ENCODE measurements at regions of chr4 and their contacts with region 1.

Region 1: DNA sequence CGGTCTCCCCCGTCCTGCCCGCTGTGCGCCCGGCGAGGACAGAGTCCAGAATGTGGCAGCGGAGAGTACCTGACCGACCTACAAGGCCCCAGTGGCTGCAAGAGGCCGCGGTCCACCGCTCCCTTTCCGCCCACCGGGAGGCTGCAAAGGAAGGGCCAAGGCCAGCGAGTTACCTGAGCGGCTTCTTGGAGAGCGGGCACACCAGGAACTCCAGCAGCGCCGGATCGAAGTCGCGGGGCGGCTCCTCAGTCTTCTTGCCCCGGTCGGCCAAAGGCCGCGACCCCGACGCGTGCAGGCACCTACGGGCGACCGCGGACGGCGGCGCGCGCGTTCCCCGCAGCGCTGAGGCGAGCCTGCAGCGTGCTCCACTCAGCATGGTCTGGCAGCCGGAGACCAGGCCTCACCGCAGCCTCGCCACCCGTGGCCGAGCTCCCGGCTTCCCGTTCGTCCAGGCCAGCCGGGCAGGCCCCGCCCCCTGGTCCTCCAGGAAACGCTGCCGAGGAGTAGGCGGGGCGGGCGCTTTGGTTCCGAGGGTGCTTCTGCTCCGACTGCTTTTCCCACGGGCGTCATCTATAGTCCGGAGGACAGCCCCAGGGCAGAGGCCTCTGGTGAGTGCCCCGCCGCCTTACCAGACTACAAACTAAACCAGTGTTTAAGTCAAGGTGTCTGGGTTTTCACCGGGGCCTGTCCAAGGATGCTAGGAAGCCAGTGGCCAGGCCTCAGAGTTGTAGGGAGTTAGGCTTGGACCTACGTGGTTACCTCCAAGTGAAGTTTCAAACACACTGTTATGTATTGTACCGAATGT is at the start of gene PYURF:
- DNase-seq: peak; percentile 44
- ATAC-seq: peak; percentile 88
- H3K4me3 ChIP-seq: peak within 1 kb of the TSS; percentile 71
- H3K27ac ChIP-seq: peak within 1 kb of the TSS; percentile 67
- H3K4me1 ChIP-seq: peaks cover 31% of the 10 kb centered on the region
- H3K27me3 ChIP-seq: no peaks in the 10 kb centered on the region
- CTCF ChIP-seq: no peak
- EP300 ChIP-seq: no peak
- POLR2A ChIP-seq: peak; percentile 93
- RAD21 ChIP-seq: no peak
- polyA plus RNA-seq, gene PYURF: 16.7 to 58.1 TPM

Region 2: GRCh38 chr4:87679449-87680169 is 843.9 kb before region 1 on chr4:
- CTCF ChIA-PET with region 1: no interaction called
- POLR2A ChIA-PET with region 1: no interaction called
- RAD21 ChIA-PET with region 1: no interaction called
- SMC1A ChIA-PET with region 1: no interaction called
- in situ Hi-C with region 1: loop called (anchors 25 kb)
- intact Hi-C with region 1: no loop called
- DNase-seq: peak; percentile 2
- ATAC-seq: peak; percentile 61; the same call in 2 of the 3 replicates
- H3K4me3 ChIP-seq: no peak overlapping the region
- H3K27ac ChIP-seq: no peak overlapping the region
- H3K4me1 ChIP-seq: peaks cover 5% of the 10 kb centered on the region; the same call in 1 of the 2 replicates
- H3K27me3 ChIP-seq: no peaks in the 10 kb centered on the region
- CTCF ChIP-seq: peak; percentile 59 to 73 (median 66)
- EP300 ChIP-seq: no peak
- POLR2A ChIP-seq: no peak
- RAD21 ChIP-seq: peak; percentile 86

Region 3: GRCh38 chr4:88284439-88285234 is 238.9 kb before region 1 on chr4 and contains the start of gene PPM1K:
- CTCF ChIA-PET with region 1: interaction called, 3 read pairs
- POLR2A ChIA-PET with region 1: interaction called, 3 read pairs
- RAD21 ChIA-PET with region 1: interaction called, 5 read pairs
- SMC1A ChIA-PET with region 1: interaction called, 3 read pairs
- in situ Hi-C with region 1: no loop called
- intact Hi-C with region 1: loop called (anchors 2 kb)
- DNase-seq: peak; percentile 93
- ATAC-seq: peak; percentile 88
- H3K4me3 ChIP-seq: peak within 1 kb of the TSS; percentile 73
- H3K27ac ChIP-seq: peak within 1 kb of the TSS; percentile 98
- H3K4me1 ChIP-seq: 0 out of 2 replicates have a peak, but pooled peaks cover 5% of the 10 kb centered on the region
- H3K27me3 ChIP-seq: no peaks in the 10 kb centered on the region
- CTCF ChIP-seq: no peak
- EP300 ChIP-seq: 0 out of 4 replicates have a peak, but pooled peaks of 1 of the 2 experiments have one; percentile 4
- POLR2A ChIP-seq: no peak; the same call in none of the 2 replicates
- RAD21 ChIP-seq: no peak
- polyA plus RNA-seq, gene PPM1K: 25.3 to 25.4 TPM

Region 4: DNA sequence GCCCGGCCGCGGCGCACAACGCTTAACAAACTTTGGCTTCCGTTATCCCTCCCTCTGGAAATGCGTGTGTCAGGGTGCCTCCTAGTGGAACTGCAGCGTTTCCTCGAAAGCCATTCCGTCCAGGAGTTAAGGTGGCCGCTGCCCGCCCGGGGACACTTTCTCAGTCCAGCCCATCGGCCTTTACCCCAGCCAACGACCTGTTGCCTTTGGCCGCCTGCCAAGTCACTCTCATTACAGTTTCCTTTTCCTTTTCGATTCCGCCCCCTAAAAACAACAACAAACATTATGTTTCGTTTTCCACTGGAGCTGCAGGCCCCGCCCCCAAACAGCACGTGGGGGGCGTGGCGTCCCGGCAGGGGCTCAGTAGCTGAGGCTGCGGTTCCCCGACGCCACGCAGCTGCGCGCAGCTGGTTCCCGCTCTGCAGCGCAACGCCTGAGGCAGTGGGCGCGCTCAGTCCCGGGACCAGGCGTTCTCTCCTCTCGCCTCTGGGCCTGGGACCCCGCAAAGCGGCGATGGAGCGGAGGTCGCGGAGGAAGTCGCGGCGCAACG is 66.7 kb before region 1 on chr4 and contains the start of gene HERC5:
- CTCF ChIA-PET with region 1: interaction called, 3 read pairs
- POLR2A ChIA-PET with region 1: interaction called, 5 read pairs
- RAD21 ChIA-PET with region 1: interaction called, 13 read pairs
- SMC1A ChIA-PET with region 1: interaction called, 3 read pairs
- in situ Hi-C with region 1: no loop called
- intact Hi-C with region 1: no loop called
- DNase-seq: peak; percentile 87
- ATAC-seq: peak; percentile 91
- H3K4me3 ChIP-seq: peak within 1 kb of the TSS; percentile 78
- H3K27ac ChIP-seq: peak within 1 kb of the TSS; percentile 97
- H3K4me1 ChIP-seq: peaks cover 5% of the 10 kb centered on the region
- H3K27me3 ChIP-seq: no peaks in the 10 kb centered on the region
- CTCF ChIP-seq: peak in 2 of 3 experiments; percentile 33 to 63; a peak in 3 of 6 replicates
- EP300 ChIP-seq: no peak
- POLR2A ChIP-seq: peak; percentile 89
- RAD21 ChIP-seq: peak; percentile 34; the same call in 1 of the 2 replicates
- polyA plus RNA-seq, gene HERC5: 12.5 to 18.6 TPM

Region 5: DNA sequence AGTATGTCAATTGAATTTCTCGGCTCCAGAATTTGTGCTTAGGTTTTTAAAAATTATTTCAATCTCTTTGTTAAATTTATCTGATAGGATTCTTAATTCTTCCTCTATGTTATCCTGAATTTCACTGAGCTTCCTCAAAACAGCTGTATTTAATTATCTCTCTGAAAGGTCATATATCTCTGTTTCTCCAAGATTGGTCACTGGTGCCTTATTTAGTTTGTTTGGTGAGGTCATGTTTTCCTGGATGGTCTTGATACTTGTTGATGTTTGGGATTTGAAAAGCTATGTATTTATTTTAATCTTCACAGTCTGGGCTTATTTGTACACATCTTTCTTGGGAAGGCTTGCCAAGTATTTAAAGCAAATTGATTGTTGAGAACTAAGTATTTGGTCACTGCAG is 44.1 kb after region 1 on chr4:
- CTCF ChIA-PET with region 1: no interaction called
- POLR2A ChIA-PET with region 1: no interaction called
- RAD21 ChIA-PET with region 1: no interaction called
- SMC1A ChIA-PET with region 1: no interaction called
- in situ Hi-C with region 1: no loop called
- intact Hi-C with region 1: no loop called
- DNase-seq: no peak
- ATAC-seq: no peak
- H3K4me3 ChIP-seq: no peak overlapping the region
- H3K27ac ChIP-seq: no peak overlapping the region
- H3K4me1 ChIP-seq: no peaks in the 10 kb centered on the region
- H3K27me3 ChIP-seq: no peaks in the 10 kb centered on the region; a peak in 1 of 4 replicates
- CTCF ChIP-seq: no peak
- EP300 ChIP-seq: no peak
- POLR2A ChIP-seq: no peak
- RAD21 ChIP-seq: no peak

Region 6: GRCh38 chr4:88659055-88659889 is 135.7 kb after region 1 on chr4:
- CTCF ChIA-PET with region 1: interaction called, 47 read pairs
- POLR2A ChIA-PET with region 1: no interaction called
- RAD21 ChIA-PET with region 1: interaction called, 26 read pairs
- SMC1A ChIA-PET with region 1: interaction called, 11 read pairs
- in situ Hi-C with region 1: no loop called
- intact Hi-C with region 1: no loop called
- DNase-seq: peak; percentile 9
- ATAC-seq: peak; percentile 95
- H3K4me3 ChIP-seq: no peak overlapping the region
- H3K27ac ChIP-seq: no peak overlapping the region
- H3K4me1 ChIP-seq: no peaks in the 10 kb centered on the region
- H3K27me3 ChIP-seq: no peaks in the 10 kb centered on the region
- CTCF ChIP-seq: peak; percentile 70 to 83 (median 73)
- EP300 ChIP-seq: no peak
- POLR2A ChIP-seq: no peak
- RAD21 ChIP-seq: peak; percentile 80